CD4-positive, alpha-beta memory T cell (primary cell): ENCODE measurements at regions of chr6 and their contacts with region 1.

Region 1: DNA sequence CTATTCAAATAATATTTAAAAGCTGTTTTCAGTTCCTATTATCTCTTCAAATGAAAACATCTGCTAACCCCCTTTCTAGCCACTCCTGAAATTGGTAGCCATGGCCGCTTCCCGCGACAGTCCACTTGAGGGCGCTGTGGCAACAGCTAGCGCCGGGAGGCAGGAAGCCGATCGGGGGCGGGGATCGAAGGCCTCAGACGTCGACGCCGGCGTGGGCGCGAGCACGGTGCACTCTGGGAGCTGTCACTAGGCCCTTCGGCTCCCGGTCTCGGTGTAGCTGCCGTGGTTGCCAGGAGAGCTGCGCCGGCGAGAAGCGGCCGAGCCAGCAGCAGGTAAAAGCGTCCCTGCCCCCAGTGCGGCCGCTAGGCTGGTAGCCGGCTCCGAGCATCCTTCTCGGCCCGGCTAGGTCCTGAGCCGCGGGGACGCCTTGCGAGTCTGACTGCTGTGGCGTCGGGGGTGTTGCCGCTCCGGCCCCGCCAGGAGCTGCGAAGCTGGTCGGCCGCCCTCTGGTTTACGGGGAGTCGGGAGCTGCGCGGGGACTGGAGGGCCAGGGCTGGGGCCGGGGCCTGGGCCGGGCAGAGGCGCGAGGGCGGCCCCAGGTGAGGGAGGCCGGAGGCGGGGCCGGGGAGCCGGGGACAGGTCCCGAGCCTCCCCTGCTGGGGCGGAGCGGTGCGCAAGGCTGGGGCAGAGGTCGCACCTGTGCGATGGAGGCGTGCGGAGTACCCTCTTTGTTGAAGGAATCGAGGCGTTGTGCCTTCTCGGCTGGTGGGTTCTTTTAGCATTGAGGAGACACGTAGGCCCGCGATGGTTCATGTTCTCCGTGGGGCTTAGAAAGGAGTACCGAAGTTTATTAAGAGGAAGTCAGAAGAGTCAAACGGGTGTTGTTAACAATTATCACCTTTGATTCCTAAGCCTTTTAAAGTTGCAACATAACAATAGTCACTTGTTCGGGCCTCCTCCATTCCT is at the start of gene DOP1A:
- DNase-seq: peak; percentile 94 to 95 (median 94)
- H3K4me3 ChIP-seq: peak within 1 kb of the TSS; percentile 30 to 84
- H3K4me3 Mint-ChIP-seq: peak within 1 kb of the TSS; percentile 86 to 99 (median 95)
- H3K27ac ChIP-seq: peak within 1 kb of the TSS; percentile 98
- H3K27ac Mint-ChIP-seq: peak within 1 kb of the TSS; percentile 92 to 97 (median 96)
- H3K4me1 ChIP-seq: peaks cover 31% of the 10 kb centered on the region
- H3K4me1 Mint-ChIP-seq: peaks cover 24 to 54% (median 41%) of the 10 kb centered on the region in 4 donors
- H3K27me3 ChIP-seq: no peaks in the 10 kb centered on the region
- H3K27me3 Mint-ChIP-seq: no peaks in the 10 kb centered on the region
- total RNA-seq, gene DOP1A: 32.5 to 36.6 TPM

Region 2: GRCh38 chr6:82247634-82248232 is 820.0 kb before region 1 on chr6 and contains the start of gene IBTK:
- CTCF ChIA-PET with region 1: interaction called, 34 read pairs
- POLR2A ChIA-PET with region 1: interaction called, 7 read pairs
- intact Hi-C with region 1: loop called (anchors 1 kb)
- DNase-seq: peak; percentile 91 to 96 (median 92)
- H3K4me3 ChIP-seq: peak within 1 kb of the TSS; percentile 52 to 91
- H3K4me3 Mint-ChIP-seq: peak within 1 kb of the TSS; percentile 95 to 99 (median 98)
- H3K27ac ChIP-seq: peak within 1 kb of the TSS; percentile 88
- H3K27ac Mint-ChIP-seq: peak within 1 kb of the TSS; percentile 95 to 99 (median 98)
- H3K4me1 ChIP-seq: peaks cover 42% of the 10 kb centered on the region
- H3K4me1 Mint-ChIP-seq: peaks cover 26 to 53% (median 38%) of the 10 kb centered on the region in 4 donors
- H3K27me3 ChIP-seq: no peaks in the 10 kb centered on the region
- H3K27me3 Mint-ChIP-seq: no peaks in the 10 kb centered on the region
- total RNA-seq, gene IBTK: 28.9 to 29.5 TPM

Region 3: DNA sequence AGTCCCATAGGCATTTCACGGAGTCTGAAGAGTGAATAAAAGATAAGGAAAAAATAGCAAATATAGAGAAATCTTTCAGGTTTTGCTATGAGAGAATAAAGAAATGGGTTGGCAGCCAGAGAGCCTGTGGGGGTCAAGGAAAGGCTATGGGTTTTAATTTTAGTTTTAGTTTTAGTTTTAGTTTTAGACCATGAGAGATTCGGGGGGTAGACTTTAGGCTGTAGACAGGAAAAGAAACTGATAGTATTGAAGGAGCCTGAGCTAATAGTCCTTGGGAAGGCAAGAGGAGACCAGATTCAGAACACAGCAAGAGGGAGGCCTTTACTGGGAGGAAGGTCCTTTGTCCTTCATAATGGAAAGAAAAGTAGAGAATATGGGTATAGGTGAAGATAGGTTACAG is 19.0 kb after region 1 on chr6:
- CTCF ChIA-PET with region 1: interaction called, 15 read pairs
- POLR2A ChIA-PET with region 1: no interaction called
- intact Hi-C with region 1: no loop called
- DNase-seq: no peak
- H3K4me3 ChIP-seq: no peak overlapping the region
- H3K4me3 Mint-ChIP-seq: peak overlapping the region in 1 of 8 donors; percentile 24
- H3K27ac ChIP-seq: no peak overlapping the region
- H3K27ac Mint-ChIP-seq: peak overlapping the region in 1 of 7 donors; percentile 73
- H3K4me1 ChIP-seq: peaks cover 4% of the 10 kb centered on the region
- H3K4me1 Mint-ChIP-seq: peaks cover 24 to 37% (median 32%) of the 10 kb centered on the region in 4 donors
- H3K27me3 ChIP-seq: no peaks in the 10 kb centered on the region
- H3K27me3 Mint-ChIP-seq: no peaks in the 10 kb centered on the region

Region 4: GRCh38 chr6:83119742-83120300 is 52.1 kb after region 1 on chr6:
- CTCF ChIA-PET with region 1: interaction called, 9 read pairs
- POLR2A ChIA-PET with region 1: no interaction called
- intact Hi-C with region 1: loop called (anchors 2 kb)
- DNase-seq: no peak
- H3K4me3 ChIP-seq: no peak overlapping the region
- H3K4me3 Mint-ChIP-seq: no peak overlapping the region
- H3K27ac ChIP-seq: no peak overlapping the region
- H3K27ac Mint-ChIP-seq: no peak overlapping the region
- H3K4me1 ChIP-seq: no peaks in the 10 kb centered on the region
- H3K4me1 Mint-ChIP-seq: no peaks in the 10 kb centered on the region
- H3K27me3 ChIP-seq: no peaks in the 10 kb centered on the region
- H3K27me3 Mint-ChIP-seq: no peaks in the 10 kb centered on the region

Region 5: GRCh38 chr6:83199863-83200225 is 132.1 kb after region 1 on chr6:
- CTCF ChIA-PET with region 1: interaction called, 108 read pairs
- POLR2A ChIA-PET with region 1: interaction called, 4 read pairs
- intact Hi-C with region 1: no loop called
- DNase-seq: no peak
- H3K4me3 ChIP-seq: no peak overlapping the region
- H3K4me3 Mint-ChIP-seq: no peak overlapping the region
- H3K27ac ChIP-seq: no peak overlapping the region
- H3K27ac Mint-ChIP-seq: no peak overlapping the region
- H3K4me1 ChIP-seq: no peaks in the 10 kb centered on the region
- H3K4me1 Mint-ChIP-seq: peaks cover 2 to 15% (median 7%) of the 10 kb centered on the region in 4 donors
- H3K27me3 ChIP-seq: no peaks in the 10 kb centered on the region
- H3K27me3 Mint-ChIP-seq: no peaks in the 10 kb centered on the region

Region 6: GRCh38 chr6:83514866-83515466 is 447.2 kb after region 1 on chr6:
- CTCF ChIA-PET with region 1: interaction called, 30 read pairs
- POLR2A ChIA-PET with region 1: no interaction called
- intact Hi-C with region 1: loop called (anchors 1 kb)
- DNase-seq: peak in 4 of 5 donors; percentile 23 to 31 (median 26)
- H3K4me3 ChIP-seq: no peak overlapping the region
- H3K4me3 Mint-ChIP-seq: no peak overlapping the region
- H3K27ac ChIP-seq: no peak overlapping the region
- H3K27ac Mint-ChIP-seq: no peak overlapping the region
- H3K4me1 ChIP-seq: no peaks in the 10 kb centered on the region
- H3K4me1 Mint-ChIP-seq: peaks cover 6 to 18% (median 13%) of the 10 kb centered on the region in 4 donors
- H3K27me3 ChIP-seq: no peaks in the 10 kb centered on the region
- H3K27me3 Mint-ChIP-seq: peaks cover 25 to 35% of the 10 kb centered on the region in 2 donors

Region 7: DNA sequence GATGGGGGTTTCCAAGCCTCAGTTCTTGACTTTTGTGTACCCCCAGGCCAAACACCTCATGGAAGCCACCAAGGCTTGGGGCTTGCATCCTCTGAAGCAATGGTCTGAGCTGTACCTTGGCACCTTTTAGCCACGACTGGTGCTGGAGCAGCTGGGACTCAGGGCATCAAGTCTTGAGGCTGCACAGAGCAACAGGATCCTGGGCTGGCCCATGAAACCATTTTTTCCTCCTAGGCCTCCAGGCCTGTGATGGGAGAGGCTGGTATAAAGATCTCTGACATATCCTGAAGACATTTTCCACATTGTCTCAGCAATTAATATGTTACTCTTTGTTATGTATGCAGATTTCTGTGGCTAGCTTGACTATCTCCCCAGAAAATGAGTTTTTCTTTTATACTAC is 1965.8 kb after region 1 on chr6:
- CTCF ChIA-PET with region 1: no interaction called
- POLR2A ChIA-PET with region 1: no interaction called
- intact Hi-C with region 1: no loop called
- DNase-seq: no peak
- H3K4me3 ChIP-seq: no peak overlapping the region
- H3K4me3 Mint-ChIP-seq: no peak overlapping the region
- H3K27ac ChIP-seq: no peak overlapping the region
- H3K27ac Mint-ChIP-seq: no peak overlapping the region
- H3K4me1 ChIP-seq: no peaks in the 10 kb centered on the region
- H3K4me1 Mint-ChIP-seq: no peaks in the 10 kb centered on the region
- H3K27me3 ChIP-seq: no peaks in the 10 kb centered on the region
- H3K27me3 Mint-ChIP-seq: no peaks in the 10 kb centered on the region